ENCODE measurements at regions of chr12 and their contacts with region 1.

Region 1: DNA sequence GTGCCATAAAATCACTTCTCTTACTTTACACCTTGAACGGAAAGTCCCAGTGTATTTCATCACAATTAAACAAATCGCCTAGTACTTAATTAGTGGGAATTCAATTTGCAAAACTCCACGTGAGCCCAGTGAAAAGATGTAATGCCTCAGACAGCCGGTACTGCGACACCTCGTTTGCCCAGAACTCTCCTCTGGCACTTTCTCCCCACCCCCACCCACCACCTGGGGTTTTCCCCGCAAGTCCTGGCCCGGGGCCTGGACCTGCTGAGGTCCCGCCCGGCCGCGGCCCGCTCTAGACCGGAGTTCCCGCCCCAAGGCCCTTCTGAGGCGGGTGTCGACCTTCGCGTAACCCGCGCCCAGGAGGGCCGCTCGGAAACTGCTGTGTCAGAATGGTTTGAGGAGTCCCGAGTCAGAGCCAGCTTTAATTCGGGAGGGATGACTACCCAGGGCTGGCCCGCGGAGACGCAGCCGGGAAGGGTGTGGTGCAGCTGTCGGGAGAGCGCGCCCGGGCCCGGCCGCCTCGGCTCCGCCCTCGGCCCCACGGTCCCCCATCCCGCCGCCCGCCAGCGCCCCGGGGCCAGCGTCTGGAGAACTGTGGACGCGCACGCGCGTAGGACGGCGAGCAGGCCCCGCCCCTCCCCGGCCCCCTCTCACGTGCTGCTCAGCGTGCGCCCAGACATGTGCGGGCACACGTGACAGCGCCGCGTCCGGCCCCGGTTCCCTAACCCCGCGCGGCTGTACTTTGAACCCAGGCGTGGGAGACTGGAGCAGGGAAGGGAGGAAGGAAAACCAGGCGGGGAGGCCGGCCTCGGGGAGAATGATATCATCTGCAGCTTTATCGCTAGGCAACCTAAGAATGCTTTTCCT is 10.8 kb downstream of the BHLHE41 start:
- DNase-seq: peak; percentile 78
- ATAC-seq: peak; percentile 91
- H3K4me3 Mint-ChIP-seq: peak overlapping the region; percentile 70
- H3K27ac Mint-ChIP-seq: no peak overlapping the region
- H3K4me1 Mint-ChIP-seq: peaks cover 7% of the 10 kb centered on the region
- H3K27me3 Mint-ChIP-seq: peaks cover 34% of the 10 kb centered on the region
- CTCF ChIP-seq: no peak

Region 2: DNA sequence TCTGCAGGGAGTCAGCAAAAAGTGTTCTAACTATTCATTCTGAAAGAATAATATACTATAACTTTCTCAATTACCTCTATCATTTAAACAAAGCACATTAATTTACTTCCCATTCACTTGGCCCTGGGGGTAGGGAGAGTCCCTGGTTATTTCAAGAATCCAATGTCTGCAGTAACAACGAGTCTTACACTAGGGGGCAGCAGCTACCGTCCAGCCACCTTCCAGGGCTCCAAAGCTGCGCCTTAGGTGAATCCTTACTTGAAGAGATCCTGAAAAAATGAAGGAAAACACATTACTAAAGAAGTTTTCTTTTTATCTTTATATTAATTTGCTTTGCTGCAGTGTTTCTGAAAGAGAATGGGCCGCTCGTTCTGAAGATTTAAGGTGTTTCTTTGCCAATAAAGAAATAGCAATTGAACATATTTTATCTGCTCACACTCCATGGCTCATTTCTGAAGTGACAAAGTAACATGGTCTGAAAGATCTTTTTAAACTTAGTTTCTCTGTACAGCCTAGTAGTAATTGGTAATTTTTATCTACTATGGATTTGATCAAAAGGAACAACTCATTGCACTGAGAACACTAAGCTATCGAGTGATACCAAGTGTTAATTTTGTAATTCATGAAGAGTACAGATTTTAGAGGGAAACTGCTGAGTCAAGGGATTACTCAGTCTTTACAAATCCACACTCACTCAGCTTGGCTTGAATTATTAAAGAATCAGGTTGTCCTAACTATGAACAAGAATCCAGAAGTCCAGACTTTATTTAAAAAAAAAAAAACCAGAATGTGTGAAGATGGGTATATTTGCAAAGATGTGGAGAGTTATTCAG is 16.8 kb before region 1 on chr12:
- CTCF ChIA-PET with region 1: interaction called, 11 read pairs
- POLR2A ChIA-PET with region 1: no interaction called
- intact Hi-C with region 1: no loop called
- DNase-seq: peak; percentile 56
- ATAC-seq: peak; percentile 93
- H3K4me3 Mint-ChIP-seq: no peak overlapping the region
- H3K27ac Mint-ChIP-seq: no peak overlapping the region
- H3K4me1 Mint-ChIP-seq: peaks cover 3% of the 10 kb centered on the region
- H3K27me3 Mint-ChIP-seq: peaks cover 9% of the 10 kb centered on the region
- CTCF ChIP-seq: peak; percentile 88

Region 3: DNA sequence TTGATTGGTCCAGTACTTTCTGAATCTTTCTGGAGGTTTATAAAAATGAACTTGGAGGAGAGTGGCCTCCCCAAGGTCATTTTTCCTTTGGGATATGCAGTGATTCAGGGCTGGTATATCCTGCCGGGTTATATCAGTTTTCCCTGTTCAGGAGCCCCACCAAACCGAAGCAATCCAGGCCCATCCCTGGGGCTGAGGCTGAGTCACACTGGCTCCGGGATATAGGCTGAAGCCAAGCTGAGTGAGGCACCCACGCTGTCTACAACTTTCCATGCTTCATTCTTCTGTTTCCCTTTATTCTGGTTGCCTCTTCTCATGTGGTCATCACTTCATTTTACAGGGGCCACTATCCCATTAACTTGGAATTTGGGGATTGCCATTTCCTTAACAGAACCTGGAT is 84.7 kb after region 1 on chr12:
- CTCF ChIA-PET with region 1: no interaction called
- POLR2A ChIA-PET with region 1: no interaction called
- intact Hi-C with region 1: no loop called
- DNase-seq: no peak
- ATAC-seq: no peak
- H3K4me3 Mint-ChIP-seq: no peak overlapping the region
- H3K27ac Mint-ChIP-seq: no peak overlapping the region
- H3K4me1 Mint-ChIP-seq: peaks cover 2% of the 10 kb centered on the region
- H3K27me3 Mint-ChIP-seq: peaks cover 41% of the 10 kb centered on the region
- CTCF ChIP-seq: no peak

Region 4: DNA sequence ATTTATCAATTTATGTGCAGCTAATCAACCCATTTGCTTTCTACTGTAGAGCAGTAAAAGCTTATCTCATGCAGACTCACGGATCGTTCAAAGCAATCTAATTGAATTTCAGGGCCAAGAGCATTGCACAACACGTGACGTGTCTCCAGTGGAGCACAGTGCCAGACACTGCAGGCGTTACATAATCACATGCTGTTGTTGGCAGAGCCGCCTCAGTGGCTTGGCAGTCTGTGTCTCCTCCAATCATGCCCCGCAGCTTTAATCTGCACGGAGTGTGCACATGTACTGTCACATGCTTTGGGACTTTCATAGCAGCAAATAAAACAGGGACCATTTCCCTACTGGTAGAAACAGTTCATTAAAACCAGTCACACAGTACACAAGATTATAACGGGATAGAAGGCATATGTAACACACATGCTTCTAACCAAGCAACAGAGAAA is 409.6 kb after region 1 on chr12:
- CTCF ChIA-PET with region 1: interaction called, 3 read pairs
- POLR2A ChIA-PET with region 1: no interaction called
- intact Hi-C with region 1: loop called (anchors 10 kb)
- DNase-seq: no peak
- ATAC-seq: no peak
- H3K4me3 Mint-ChIP-seq: no peak overlapping the region
- H3K27ac Mint-ChIP-seq: no peak overlapping the region
- H3K4me1 Mint-ChIP-seq: peaks cover 15% of the 10 kb centered on the region
- H3K27me3 Mint-ChIP-seq: no peaks in the 10 kb centered on the region
- CTCF ChIP-seq: no peak

Region 5: DNA sequence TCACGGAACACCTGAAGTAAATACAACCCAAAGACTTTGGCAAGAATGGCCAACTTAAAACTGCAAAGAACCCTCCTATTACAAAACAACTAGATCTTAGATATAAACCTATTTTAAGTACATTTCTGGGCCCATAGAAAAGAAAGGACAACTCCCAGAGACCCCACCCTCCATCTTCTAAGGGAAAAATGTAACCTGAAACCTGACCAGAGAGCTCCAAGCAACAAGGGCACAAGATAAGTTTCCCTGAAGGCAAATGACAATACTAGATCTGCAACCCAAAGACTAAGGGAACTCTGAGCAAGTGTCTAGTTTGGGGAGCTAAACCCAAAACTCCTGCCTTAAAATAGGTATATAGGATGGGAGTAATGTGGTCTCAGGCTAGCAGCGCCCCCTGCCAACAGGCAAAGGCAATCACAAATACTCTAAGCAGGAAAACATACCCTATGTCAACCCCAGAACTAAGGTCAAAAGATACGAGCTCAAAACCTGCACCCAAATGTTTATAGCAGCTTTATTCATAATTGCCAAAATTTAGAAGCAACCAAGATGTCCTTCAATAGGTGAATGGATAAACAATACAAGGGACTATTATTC is 500.0 kb after region 1 on chr12:
- CTCF ChIA-PET with region 1: interaction called, 3 read pairs
- POLR2A ChIA-PET with region 1: no interaction called
- intact Hi-C with region 1: loop called (anchors 10 kb)
- DNase-seq: peak; percentile 33
- ATAC-seq: no peak
- H3K4me3 Mint-ChIP-seq: no peak overlapping the region
- H3K27ac Mint-ChIP-seq: no peak overlapping the region
- H3K4me1 Mint-ChIP-seq: no peaks in the 10 kb centered on the region
- H3K27me3 Mint-ChIP-seq: no peaks in the 10 kb centered on the region
- CTCF ChIP-seq: peak; percentile 60